ENCODE measurements at regions of chr1 and their contacts with region 1.

Region 1: DNA sequence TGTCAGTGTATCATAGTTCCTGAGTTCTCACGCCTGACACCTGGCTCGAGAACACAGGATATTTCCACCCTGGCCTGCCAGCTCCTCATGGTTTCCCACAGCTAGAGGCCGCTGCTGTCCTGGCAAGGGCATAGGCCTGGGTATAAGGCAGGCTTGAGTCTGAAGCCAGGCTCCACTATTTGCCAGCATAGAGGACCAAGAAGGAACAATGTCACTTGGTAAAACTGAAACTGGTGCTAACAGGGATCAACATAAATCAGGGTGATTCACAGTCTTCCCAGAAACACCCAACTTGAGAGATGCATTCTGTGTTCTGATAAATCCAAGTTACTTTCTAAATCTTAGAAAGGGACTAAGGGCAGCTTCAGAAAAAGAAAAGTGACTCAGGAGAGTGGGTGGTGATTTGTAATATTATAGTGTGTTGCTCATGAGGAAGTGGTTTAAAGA is 6.9 kb upstream of the S100A2 start:
- DNase-seq: peak; percentile 37
- ATAC-seq: peak; percentile 94
- H3K4me3 ChIP-seq: no peak overlapping the region
- H3K27ac ChIP-seq: no peak overlapping the region
- H3K4me1 ChIP-seq: peaks cover 8% of the 10 kb centered on the region
- H3K27me3 ChIP-seq: no peaks in the 10 kb centered on the region
- CTCF ChIP-seq: peak; percentile 85 to 97 (median 89)
- EP300 ChIP-seq: no peak
- POLR2A ChIP-seq: no peak
- RAD21 ChIP-seq: peak; percentile 92

Region 2: DNA sequence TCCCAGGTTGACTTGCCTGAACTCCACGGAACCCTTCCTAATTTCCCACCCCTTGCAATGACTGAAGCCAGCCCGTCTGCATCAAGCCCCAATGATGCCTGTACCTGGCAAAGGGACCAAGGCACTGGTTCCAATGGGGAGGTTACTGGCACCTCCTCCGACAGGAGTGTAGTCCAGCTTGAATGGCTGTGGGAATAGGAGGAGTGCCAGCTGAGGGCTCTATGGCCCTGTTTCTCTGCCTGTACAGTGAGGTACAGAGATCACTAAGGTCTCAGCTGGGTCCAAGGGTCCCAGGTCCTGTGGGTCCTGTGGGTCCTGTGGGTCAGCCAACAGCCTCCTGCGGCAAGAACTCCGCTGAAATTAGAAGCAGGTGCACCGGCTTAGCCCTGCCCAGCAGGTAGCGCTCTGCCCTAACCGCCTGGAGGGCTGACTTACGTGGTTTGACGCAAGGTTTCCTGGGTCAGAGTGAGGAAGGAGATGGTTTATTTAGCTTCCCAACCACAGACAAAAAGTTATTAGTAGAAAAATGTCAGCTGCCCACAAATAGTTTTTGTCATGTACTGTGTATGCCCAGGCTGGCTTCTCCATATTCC is 612.0 kb before region 1 on chr1:
- CTCF ChIA-PET with region 1: no interaction called
- POLR2A ChIA-PET with region 1: no interaction called
- RAD21 ChIA-PET with region 1: no interaction called
- SMC1A ChIA-PET with region 1: no interaction called
- in situ Hi-C with region 1: no loop called
- intact Hi-C with region 1: no loop called
- DNase-seq: no peak
- ATAC-seq: peak; percentile 67
- H3K4me3 ChIP-seq: no peak overlapping the region
- H3K27ac ChIP-seq: no peak overlapping the region
- H3K4me1 ChIP-seq: no peaks in the 10 kb centered on the region
- H3K27me3 ChIP-seq: peaks cover 0 to 2% of the 10 kb centered on the region in 2 experiments; a peak in 1 of 4 replicates
- CTCF ChIP-seq: peak; percentile 43 to 47 (median 44); a peak in 5 of 6 replicates
- EP300 ChIP-seq: no peak
- POLR2A ChIP-seq: no peak
- RAD21 ChIP-seq: peak; percentile 75

Region 3: DNA sequence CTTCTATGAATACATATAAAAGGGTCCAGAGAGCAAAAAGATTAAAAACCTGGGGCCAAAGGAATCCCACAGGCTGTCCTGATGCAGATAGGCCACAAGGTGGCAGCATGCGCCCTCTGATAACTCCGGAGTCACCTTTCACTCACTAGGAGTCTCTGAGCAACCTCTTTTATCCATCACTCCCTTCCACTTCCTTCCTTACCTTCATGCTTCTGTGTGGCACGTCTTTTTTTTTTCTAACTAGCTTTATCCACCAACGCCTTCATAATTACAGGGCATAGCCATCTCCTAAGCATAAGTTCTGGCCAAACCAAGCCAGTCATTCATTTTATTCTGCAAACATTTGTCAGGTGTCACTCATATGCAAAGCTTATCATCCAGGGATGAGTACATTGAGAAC is 220.1 kb before region 1 on chr1:
- CTCF ChIA-PET with region 1: interaction called, 10 read pairs
- POLR2A ChIA-PET with region 1: no interaction called
- RAD21 ChIA-PET with region 1: interaction called, 3 read pairs
- SMC1A ChIA-PET with region 1: interaction called, 4 read pairs
- in situ Hi-C with region 1: no loop called
- intact Hi-C with region 1: loop called (anchors 2 kb)
- DNase-seq: no peak
- ATAC-seq: peak; percentile 73
- H3K4me3 ChIP-seq: no peak overlapping the region
- H3K27ac ChIP-seq: no peak overlapping the region
- H3K4me1 ChIP-seq: peaks cover 12% of the 10 kb centered on the region
- H3K27me3 ChIP-seq: no peaks in the 10 kb centered on the region
- CTCF ChIP-seq: peak; percentile 80 to 88 (median 83)
- EP300 ChIP-seq: no peak
- POLR2A ChIP-seq: no peak
- RAD21 ChIP-seq: peak; percentile 82

Region 4: GRCh38 chr1:153545067-153546055 is 27.2 kb before region 1 on chr1 and contains the start of gene S100A4:
- CTCF ChIA-PET with region 1: interaction called, 11 read pairs
- POLR2A ChIA-PET with region 1: interaction called, 3 read pairs
- RAD21 ChIA-PET with region 1: interaction called, 10 read pairs
- SMC1A ChIA-PET with region 1: interaction called, 13 read pairs
- in situ Hi-C with region 1: no loop called
- intact Hi-C with region 1: no loop called
- DNase-seq: peak; percentile 46
- ATAC-seq: peak; percentile 85
- H3K4me3 ChIP-seq: no peak within 1 kb of the TSS
- H3K27ac ChIP-seq: no peak within 1 kb of the TSS
- H3K4me1 ChIP-seq: peaks cover 25% of the 10 kb centered on the region
- H3K27me3 ChIP-seq: no peaks in the 10 kb centered on the region
- CTCF ChIP-seq: no peak
- EP300 ChIP-seq: no peak
- POLR2A ChIP-seq: peak; percentile 58; the same call in 1 of the 2 replicates
- RAD21 ChIP-seq: no peak
- polyA plus RNA-seq, gene S100A4: 73.9 to 104 TPM

Region 5: DNA sequence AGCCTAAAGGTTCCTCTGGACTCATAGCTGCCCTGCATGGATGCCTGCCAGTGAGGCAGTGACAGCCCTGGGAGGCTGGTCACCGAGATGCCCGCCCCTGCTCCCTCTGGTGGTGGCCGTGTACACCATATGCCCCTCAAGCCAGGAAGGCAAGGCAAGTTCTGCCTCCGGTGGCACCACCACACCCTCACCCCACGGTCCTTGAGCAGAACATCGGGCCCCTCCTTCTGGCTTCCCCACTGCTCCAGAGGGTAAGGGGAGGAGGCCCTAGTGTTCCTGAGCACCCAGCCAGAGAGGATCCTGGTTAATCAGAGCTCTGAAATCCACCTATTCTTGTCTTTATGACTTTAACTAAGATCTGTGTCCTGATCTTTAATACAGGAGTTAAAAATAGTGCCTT is 45.1 kb after region 1 on chr1:
- CTCF ChIA-PET with region 1: interaction called, 106 read pairs
- POLR2A ChIA-PET with region 1: no interaction called
- RAD21 ChIA-PET with region 1: interaction called, 60 read pairs
- SMC1A ChIA-PET with region 1: interaction called, 36 read pairs
- in situ Hi-C with region 1: no loop called
- intact Hi-C with region 1: loop called (anchors 1 kb)
- DNase-seq: no peak
- ATAC-seq: peak; percentile 94
- H3K4me3 ChIP-seq: no peak overlapping the region
- H3K27ac ChIP-seq: no peak overlapping the region
- H3K4me1 ChIP-seq: peaks cover 15% of the 10 kb centered on the region
- H3K27me3 ChIP-seq: no peaks in the 10 kb centered on the region
- CTCF ChIP-seq: peak; percentile 49 to 69 (median 57)
- EP300 ChIP-seq: no peak
- POLR2A ChIP-seq: no peak
- RAD21 ChIP-seq: peak; percentile 36; the same call in 1 of the 2 replicates

Region 6: GRCh38 chr1:153646672-153647374 is 74.2 kb after region 1 on chr1:
- CTCF ChIA-PET with region 1: interaction called, 20 read pairs
- POLR2A ChIA-PET with region 1: no interaction called
- RAD21 ChIA-PET with region 1: interaction called, 6 read pairs
- SMC1A ChIA-PET with region 1: interaction called, 10 read pairs
- in situ Hi-C with region 1: no loop called
- intact Hi-C with region 1: no loop called
- DNase-seq: no peak
- ATAC-seq: no peak
- H3K4me3 ChIP-seq: no peak overlapping the region
- H3K27ac ChIP-seq: no peak overlapping the region
- H3K4me1 ChIP-seq: no peaks in the 10 kb centered on the region
- H3K27me3 ChIP-seq: no peaks in the 10 kb centered on the region
- CTCF ChIP-seq: no peak
- EP300 ChIP-seq: no peak
- POLR2A ChIP-seq: no peak
- RAD21 ChIP-seq: no peak

Region 7: GRCh38 chr1:153670859-153671627 is 98.5 kb after region 1 on chr1 and contains the start of gene ILF2:
- CTCF ChIA-PET with region 1: interaction called, 43 read pairs
- POLR2A ChIA-PET with region 1: interaction called, 5 read pairs
- RAD21 ChIA-PET with region 1: interaction called, 11 read pairs
- SMC1A ChIA-PET with region 1: interaction called, 5 read pairs
- in situ Hi-C with region 1: no loop called
- intact Hi-C with region 1: loop called (anchors 5 kb)
- DNase-seq: peak; percentile 100
- ATAC-seq: peak; percentile 95
- H3K4me3 ChIP-seq: peak within 1 kb of the TSS; percentile 99
- H3K27ac ChIP-seq: peak within 1 kb of the TSS; percentile 85
- H3K4me1 ChIP-seq: peaks cover 4% of the 10 kb centered on the region; the same call in 1 of the 2 replicates
- H3K27me3 ChIP-seq: no peaks in the 10 kb centered on the region
- CTCF ChIP-seq: peak; percentile 13 to 47 (median 32); a peak in 4 of 6 replicates
- EP300 ChIP-seq: peak in 1 of 2 experiments; percentile 83; a peak in 1 of 4 replicates
- POLR2A ChIP-seq: peak; percentile 94
- RAD21 ChIP-seq: no peak
- polyA plus RNA-seq, gene ILF2: 444 to 455 TPM

Region 8: DNA sequence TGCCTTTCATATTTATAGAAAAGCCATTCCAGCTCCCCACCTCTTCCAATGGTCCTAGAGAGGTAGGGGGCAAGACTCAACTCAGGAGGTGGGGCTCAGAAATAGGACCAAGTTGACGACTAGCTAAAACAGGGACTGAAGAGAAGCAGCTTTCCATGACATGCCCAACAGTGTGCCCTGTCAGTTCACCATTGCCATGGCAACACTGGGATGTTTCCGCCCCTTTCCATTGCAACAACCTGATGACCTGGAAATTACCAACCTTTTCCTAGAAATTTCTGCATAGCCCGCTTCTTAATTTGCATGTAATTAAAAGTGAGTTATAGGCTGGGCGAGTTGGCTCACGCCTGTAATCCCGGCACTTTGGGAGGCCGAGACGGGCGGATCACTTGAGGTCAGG is 132.9 kb after region 1 on chr1:
- CTCF ChIA-PET with region 1: no interaction called
- POLR2A ChIA-PET with region 1: no interaction called
- RAD21 ChIA-PET with region 1: no interaction called
- SMC1A ChIA-PET with region 1: no interaction called
- in situ Hi-C with region 1: no loop called
- intact Hi-C with region 1: no loop called
- DNase-seq: no peak
- ATAC-seq: no peak
- H3K4me3 ChIP-seq: no peak overlapping the region
- H3K27ac ChIP-seq: no peak overlapping the region
- H3K4me1 ChIP-seq: no peaks in the 10 kb centered on the region
- H3K27me3 ChIP-seq: no peaks in the 10 kb centered on the region
- CTCF ChIP-seq: no peak
- EP300 ChIP-seq: no peak
- POLR2A ChIP-seq: no peak
- RAD21 ChIP-seq: no peak

Region 9: GRCh38 chr1:153749408-153750005 is 176.9 kb after region 1 on chr1:
- CTCF ChIA-PET with region 1: interaction called, 15 read pairs
- POLR2A ChIA-PET with region 1: no interaction called
- RAD21 ChIA-PET with region 1: interaction called, 4 read pairs
- SMC1A ChIA-PET with region 1: interaction called, 10 read pairs
- in situ Hi-C with region 1: no loop called
- intact Hi-C with region 1: loop called (anchors 5 kb)
- DNase-seq: peak; percentile 48
- ATAC-seq: peak; percentile 100
- H3K4me3 ChIP-seq: no peak overlapping the region
- H3K27ac ChIP-seq: no peak overlapping the region
- H3K4me1 ChIP-seq: no peaks in the 10 kb centered on the region; the same call in 1 of the 2 replicates
- H3K27me3 ChIP-seq: no peaks in the 10 kb centered on the region
- CTCF ChIP-seq: peak; percentile 97 to 99 (median 99); a peak in 5 of 6 replicates
- EP300 ChIP-seq: no peak
- POLR2A ChIP-seq: no peak
- RAD21 ChIP-seq: peak; percentile 82